WTC11 (cell line): ENCODE measurements at regions of chr14 and their contacts with region 1.

Region 1: GRCh38 chr14:25132732-25133422 is 82.9 kb upstream of the STXBP6 start:
- DNase-seq: peak; percentile 76
- ATAC-seq: peak; percentile 97
- H3K4me3 Mint-ChIP-seq: peak overlapping the region; percentile 34
- H3K27ac Mint-ChIP-seq: no peak overlapping the region
- H3K4me1 Mint-ChIP-seq: peaks cover 4% of the 10 kb centered on the region
- H3K27me3 Mint-ChIP-seq: peaks cover 24% of the 10 kb centered on the region
- CTCF ChIP-seq: peak; percentile 68

Region 2: DNA sequence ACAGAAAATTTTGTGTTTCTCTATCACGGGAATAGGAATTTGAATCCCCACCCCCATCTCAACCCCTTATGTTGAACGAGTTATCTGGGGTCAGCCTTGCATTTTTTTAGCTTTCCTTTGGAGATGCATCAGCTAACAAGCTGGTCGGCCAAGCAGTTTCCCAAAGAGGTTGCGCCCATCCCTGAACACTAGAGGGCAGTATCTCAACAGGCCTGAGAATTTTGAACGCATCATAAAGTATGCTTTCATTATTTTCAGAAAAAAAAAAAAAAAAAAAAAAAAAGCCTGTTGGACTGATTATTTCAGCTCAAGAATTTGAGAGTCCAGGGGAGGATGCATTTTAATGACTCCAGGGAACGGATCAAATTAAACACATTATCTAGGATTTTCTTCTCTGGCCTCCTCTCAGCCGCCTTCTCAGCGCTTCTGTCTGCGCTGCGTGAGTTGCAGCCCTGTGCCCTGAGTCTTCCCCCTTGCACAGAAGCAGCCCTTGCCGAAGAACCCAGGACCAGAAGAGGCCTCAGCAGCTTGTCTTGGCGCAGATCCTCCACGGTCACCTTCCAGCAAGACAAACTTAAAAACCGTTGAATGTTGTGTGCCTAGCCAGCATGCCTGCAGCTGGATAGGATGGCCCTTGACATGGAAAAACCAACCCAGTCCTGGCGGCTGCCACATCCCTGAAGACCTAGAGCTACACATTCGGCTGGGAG is 422.3 kb before region 1 on chr14:
- CTCF ChIA-PET with region 1: interaction called, 44 read pairs
- POLR2A ChIA-PET with region 1: no interaction called
- DNase-seq: peak; percentile 68
- ATAC-seq: peak; percentile 73
- H3K4me3 Mint-ChIP-seq: no peak overlapping the region
- H3K27ac Mint-ChIP-seq: no peak overlapping the region
- H3K4me1 Mint-ChIP-seq: peaks cover 14% of the 10 kb centered on the region
- H3K27me3 Mint-ChIP-seq: no peaks in the 10 kb centered on the region
- CTCF ChIP-seq: peak; percentile 38; the same call in 1 of the 2 replicates

Region 3: DNA sequence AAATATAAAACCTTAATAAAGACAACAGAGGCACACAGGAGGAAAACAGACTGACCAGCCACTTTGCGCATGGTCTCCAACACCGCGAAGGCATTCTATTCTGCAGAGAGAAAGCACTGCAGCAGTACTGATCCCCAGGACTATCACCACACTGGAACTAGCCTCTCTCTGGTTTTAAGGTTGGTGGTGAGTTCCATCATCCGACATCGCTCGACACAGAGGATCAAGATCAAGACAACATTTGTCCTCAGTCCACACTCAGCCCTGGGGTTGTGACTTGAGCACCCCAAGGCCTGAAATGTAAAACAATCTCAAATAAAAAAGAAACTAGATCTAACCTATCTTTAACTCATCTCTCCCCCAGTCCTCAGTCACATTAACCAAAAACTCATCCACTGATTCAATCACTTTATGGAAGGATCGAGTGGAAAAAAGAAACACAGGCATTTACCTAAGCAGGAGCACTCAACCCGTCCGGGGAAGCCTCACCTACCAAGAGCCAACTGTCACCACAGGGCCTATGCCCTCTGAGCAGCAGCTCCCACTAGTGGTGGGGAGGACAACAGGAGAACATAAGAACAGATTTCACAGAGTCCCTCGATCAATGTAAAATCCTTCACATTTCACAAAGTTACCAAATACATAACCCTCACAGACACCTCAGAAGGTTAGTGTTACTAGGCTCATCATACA is 100.6 kb before region 1 on chr14:
- CTCF ChIA-PET with region 1: interaction called, 3 read pairs
- POLR2A ChIA-PET with region 1: interaction called, 10 read pairs
- DNase-seq: peak; percentile 47
- ATAC-seq: peak; percentile 78; the same call in 1 of the 2 replicates
- H3K4me3 Mint-ChIP-seq: no peak overlapping the region
- H3K27ac Mint-ChIP-seq: no peak overlapping the region
- H3K4me1 Mint-ChIP-seq: peaks cover 3% of the 10 kb centered on the region
- H3K27me3 Mint-ChIP-seq: no peaks in the 10 kb centered on the region
- CTCF ChIP-seq: 0 out of 2 replicates have a peak, but pooled peaks have one; percentile 30

Region 4: GRCh38 chr14:25056688-25057078 is 76.2 kb before region 1 on chr14:
- CTCF ChIA-PET with region 1: interaction called, 10 read pairs
- POLR2A ChIA-PET with region 1: no interaction called
- DNase-seq: no peak
- ATAC-seq: no peak
- H3K4me3 Mint-ChIP-seq: no peak overlapping the region
- H3K27ac Mint-ChIP-seq: no peak overlapping the region
- H3K4me1 Mint-ChIP-seq: peaks cover 29% of the 10 kb centered on the region
- H3K27me3 Mint-ChIP-seq: peaks cover 11% of the 10 kb centered on the region
- CTCF ChIP-seq: no peak

Region 5: GRCh38 chr14:25237845-25238244 is 105.0 kb after region 1 on chr14:
- CTCF ChIA-PET with region 1: interaction called, 14 read pairs
- POLR2A ChIA-PET with region 1: no interaction called
- DNase-seq: peak; percentile 53
- ATAC-seq: peak; percentile 98
- H3K4me3 Mint-ChIP-seq: peak overlapping the region; percentile 33
- H3K27ac Mint-ChIP-seq: no peak overlapping the region
- H3K4me1 Mint-ChIP-seq: peaks cover 28% of the 10 kb centered on the region
- H3K27me3 Mint-ChIP-seq: peaks cover 4% of the 10 kb centered on the region; the same call in 1 of the 2 replicates
- CTCF ChIP-seq: no peak

Region 6: DNA sequence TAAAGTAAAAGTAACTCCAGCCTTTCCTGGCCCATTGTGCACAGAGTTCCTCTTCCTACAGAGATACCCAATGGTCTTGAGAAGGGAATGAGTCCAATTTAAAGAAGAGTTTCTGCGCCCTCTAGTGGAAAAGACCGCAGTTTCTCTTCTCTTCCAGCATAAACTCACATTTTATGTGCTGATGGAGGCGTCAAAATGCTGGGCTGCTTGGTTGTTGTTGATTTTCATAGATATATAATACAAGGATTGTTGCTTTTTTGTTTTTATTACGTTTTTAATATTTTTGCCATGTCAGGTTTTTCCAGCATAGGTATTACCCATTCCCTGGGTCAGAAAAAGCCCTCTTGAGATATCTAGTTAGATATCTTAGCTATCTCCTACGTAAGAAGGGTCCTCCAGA is 273.9 kb after region 1 on chr14:
- CTCF ChIA-PET with region 1: interaction called, 11 read pairs
- POLR2A ChIA-PET with region 1: no interaction called
- DNase-seq: peak; percentile 59
- ATAC-seq: peak; percentile 76
- H3K4me3 Mint-ChIP-seq: no peak overlapping the region
- H3K27ac Mint-ChIP-seq: no peak overlapping the region
- H3K4me1 Mint-ChIP-seq: no peaks in the 10 kb centered on the region
- H3K27me3 Mint-ChIP-seq: peaks cover 3% of the 10 kb centered on the region; the same call in 1 of the 2 replicates
- CTCF ChIP-seq: peak; percentile 68